Heart left ventricle (tissue), 16 donors: ENCODE measurements at regions of chr11 and their contacts with region 1.

Region 1: DNA sequence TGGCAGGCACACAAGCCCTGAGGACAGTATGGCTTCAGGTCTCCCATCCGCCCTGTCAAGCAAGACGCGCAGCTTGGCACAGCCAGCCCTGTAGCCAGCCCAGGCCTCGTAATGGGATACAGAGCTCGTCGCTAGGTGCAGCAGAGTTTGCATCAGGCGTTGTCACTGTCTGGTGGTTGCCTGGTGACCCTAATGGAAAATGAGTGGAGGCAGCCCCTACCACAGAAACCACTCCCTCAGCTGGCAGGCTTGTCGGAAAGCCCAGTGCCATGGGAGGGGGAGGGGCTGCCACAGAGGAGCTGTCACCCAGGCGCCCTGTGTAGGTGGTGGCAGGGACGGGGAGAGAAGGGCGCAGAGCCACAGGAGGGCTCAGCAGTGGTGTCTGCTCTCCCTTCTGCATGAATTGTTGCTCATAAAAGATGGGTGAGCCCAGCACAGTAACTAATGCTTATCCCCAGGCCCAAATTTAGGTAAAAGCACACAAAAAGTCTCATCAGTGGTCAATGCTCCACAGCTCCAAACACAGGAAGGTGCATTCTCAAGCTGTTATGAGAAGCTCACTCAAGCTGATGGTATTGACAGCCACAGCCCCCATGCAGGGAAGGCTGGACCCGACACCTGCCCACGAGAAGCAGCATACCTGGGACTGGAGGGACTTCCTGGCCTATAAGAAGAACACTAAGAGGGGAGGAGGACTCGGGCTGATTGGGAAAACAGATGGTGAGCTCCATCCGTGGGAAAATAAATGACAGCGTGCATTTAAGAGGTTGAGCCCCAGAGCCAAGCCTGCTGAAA is 164.6 kb downstream of the ETS1 start:
- DNase-seq: peak in 4 of 5 donors; percentile 42 to 71 (median 53)
- ATAC-seq: peak; percentile 14 to 80 (median 68)
- H3K4me3 ChIP-seq: no peak overlapping the region
- H3K27ac ChIP-seq: peak overlapping the region in 9 of 12 donors; percentile 19 to 90 (median 71)
- H3K4me1 ChIP-seq: peaks cover 8 to 45% (median 34%) of the 10 kb centered on the region in 12 donors
- H3K27me3 ChIP-seq: no peaks in the 10 kb centered on the region
- CTCF ChIP-seq: no peak
- POLR2A ChIP-seq: no peak

Region 2: DNA sequence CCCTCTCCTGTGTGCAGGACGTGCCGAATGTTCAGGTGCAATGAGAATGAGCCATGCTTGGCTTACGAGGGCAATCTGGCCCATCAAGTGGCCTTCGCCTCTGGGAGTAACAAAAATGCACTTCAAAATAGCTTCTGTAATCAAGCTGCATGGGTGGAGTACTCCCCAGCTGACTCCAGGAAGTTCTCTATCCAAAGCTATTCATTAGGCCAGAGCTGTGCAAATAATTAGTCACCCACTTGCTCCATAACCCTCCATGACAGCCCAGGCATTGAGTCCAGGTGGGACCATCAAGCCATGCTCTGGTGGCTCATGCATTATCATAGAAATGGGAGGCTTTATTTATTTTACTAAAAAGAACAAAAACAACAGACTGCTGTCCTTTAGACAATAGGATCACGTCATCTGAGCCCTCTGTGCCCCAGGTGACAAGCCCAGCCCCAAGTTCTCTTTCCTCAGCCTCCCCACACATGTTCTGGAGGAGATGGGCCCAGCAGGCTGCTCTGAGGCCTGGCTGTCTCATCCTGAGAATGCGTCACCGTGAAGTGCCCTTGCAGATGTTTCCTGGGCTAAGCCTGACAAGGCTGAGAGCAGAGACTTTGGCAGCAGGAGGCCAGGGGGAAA is 80.2 kb before region 1 on chr11:
- intact Hi-C with region 1: loop called in 3 of 10 experiments (anchors 5 kb)
- DNase-seq: peak in 4 of 5 donors; percentile 64 to 81 (median 70)
- ATAC-seq: peak; percentile 88 to 93 (median 93)
- H3K4me3 ChIP-seq: no peak overlapping the region
- H3K27ac ChIP-seq: peak overlapping the region; percentile 11 to 89 (median 73)
- H3K4me1 ChIP-seq: peaks cover 0 to 40% (median 21%) of the 10 kb centered on the region in 12 donors
- H3K27me3 ChIP-seq: no peaks in the 10 kb centered on the region
- CTCF ChIP-seq: no peak
- POLR2A ChIP-seq: no peak

Region 3: GRCh38 chr11:128453444-128454336 is 30.9 kb after region 1 on chr11:
- intact Hi-C with region 1: loop called in 1 of 10 experiments (anchors 5 kb)
- DNase-seq: peak in 4 of 5 donors; percentile 61 to 76 (median 69)
- ATAC-seq: peak; percentile 53 to 85 (median 76)
- H3K4me3 ChIP-seq: no peak overlapping the region
- H3K27ac ChIP-seq: peak overlapping the region in 5 of 12 donors; percentile 4 to 56 (median 39)
- H3K4me1 ChIP-seq: peaks cover 3 to 66% (median 33%) of the 10 kb centered on the region in 12 donors
- H3K27me3 ChIP-seq: no peaks in the 10 kb centered on the region
- CTCF ChIP-seq: no peak
- POLR2A ChIP-seq: no peak

Region 4: GRCh38 chr11:128653801-128654231 is 231.0 kb after region 1 on chr11:
- intact Hi-C with region 1: no loop called
- DNase-seq: peak in 4 of 5 donors; percentile 40 to 70 (median 62)
- ATAC-seq: peak; percentile 42 to 89 (median 84)
- H3K4me3 ChIP-seq: peak overlapping the region in 3 of 12 donors; percentile 12 to 32 (median 13)
- H3K27ac ChIP-seq: no peak overlapping the region
- H3K4me1 ChIP-seq: peaks cover 0 to 4% (median 0%) of the 10 kb centered on the region in 12 donors
- H3K27me3 ChIP-seq: peaks cover 0 to 4% (median 0%) of the 10 kb centered on the region in 9 donors
- CTCF ChIP-seq: no peak
- POLR2A ChIP-seq: no peak

Region 5: GRCh38 chr11:129192156-129192555 is 769.4 kb after region 1 on chr11 and contains the start of gene ARHGAP32:
- intact Hi-C with region 1: no loop called
- DNase-seq: no peak
- ATAC-seq: no peak
- H3K4me3 ChIP-seq: no peak within 1 kb of the TSS
- H3K27ac ChIP-seq: no peak within 1 kb of the TSS
- H3K4me1 ChIP-seq: no peaks in the 10 kb centered on the region
- H3K27me3 ChIP-seq: no peaks in the 10 kb centered on the region
- CTCF ChIP-seq: no peak
- POLR2A ChIP-seq: no peak
- total RNA-seq, gene ARHGAP32: 3.5 to 9.5 (median 4.9) TPM